Panc1 (cell line): ENCODE measurements at regions of chr19 and their contacts with region 1.

Region 1: GRCh38 chr19:17448131-17448967 is at the start of gene TMEM221:
- DNase-seq: no peak
- ATAC-seq: peak; percentile 83
- H3K4me3 ChIP-seq: peak within 1 kb of the TSS; percentile 36 to 39
- H3K27ac ChIP-seq: no peak within 1 kb of the TSS
- H3K4me1 ChIP-seq: no peaks in the 10 kb centered on the region
- H3K27me3 ChIP-seq: no peaks in the 10 kb centered on the region
- CTCF ChIP-seq: peak; percentile 80
- total RNA-seq, gene TMEM221: 0.39 TPM

Region 2: GRCh38 chr19:17687857-17688784 is 239.8 kb after region 1 on chr19 and contains the start of gene UNC13A:
- CTCF ChIA-PET with region 1: interaction called, 13 read pairs
- POLR2A ChIA-PET with region 1: no interaction called
- in situ Hi-C with region 1: no loop called
- intact Hi-C with region 1: no loop called
- DNase-seq: no peak
- ATAC-seq: peak; percentile 83
- H3K4me3 ChIP-seq: peak within 1 kb of the TSS in 1 of 2 experiments; percentile 11; a peak in 1 of 4 replicates
- H3K27ac ChIP-seq: no peak within 1 kb of the TSS
- H3K4me1 ChIP-seq: 0 out of 2 replicates have a peak, but pooled peaks cover 2% of the 10 kb centered on the region
- H3K27me3 ChIP-seq: no peaks in the 10 kb centered on the region
- CTCF ChIP-seq: no peak
- total RNA-seq, gene UNC13A: 0.46 TPM